Endothelial cell of umbilical vein (primary cell): ENCODE measurements at regions of chr3 and their contacts with region 1.

Region 1: GRCh38 chr3:143348486-143349327 is 229.1 kb downstream of the CHST2 start:
- DNase-seq: no peak
- H3K4me3 ChIP-seq: no peak overlapping the region
- H3K27ac ChIP-seq: no peak overlapping the region
- H3K4me1 ChIP-seq: peaks cover 21% of the 10 kb centered on the region
- H3K27me3 ChIP-seq: no peaks in the 10 kb centered on the region
- CTCF ChIP-seq: no peak
- POLR2A ChIP-seq: no peak

Region 2: GRCh38 chr3:143302638-143303171 is 46.0 kb before region 1 on chr3:
- CTCF ChIA-PET with region 1: no interaction called
- POLR2A ChIA-PET with region 1: no interaction called
- dilution Hi-C with region 1: no loop called
- intact Hi-C with region 1: loop called (anchors 2 kb)
- DNase-seq: peak; percentile 90
- H3K4me3 ChIP-seq: no peak overlapping the region
- H3K27ac ChIP-seq: peak overlapping the region; percentile 71
- H3K4me1 ChIP-seq: peaks cover 48% of the 10 kb centered on the region
- H3K27me3 ChIP-seq: no peaks in the 10 kb centered on the region
- CTCF ChIP-seq: no peak
- POLR2A ChIP-seq: peak; percentile 71

Region 3: GRCh38 chr3:143329567-143330211 is 19.0 kb before region 1 on chr3:
- CTCF ChIA-PET with region 1: interaction called, 8 read pairs
- POLR2A ChIA-PET with region 1: no interaction called
- dilution Hi-C with region 1: no loop called
- intact Hi-C with region 1: loop called (anchors 1 kb)
- DNase-seq: peak; percentile 62
- H3K4me3 ChIP-seq: no peak overlapping the region
- H3K27ac ChIP-seq: no peak overlapping the region
- H3K4me1 ChIP-seq: peaks cover 37% of the 10 kb centered on the region
- H3K27me3 ChIP-seq: no peaks in the 10 kb centered on the region
- CTCF ChIP-seq: peak in 1 of 2 donors; percentile 5
- POLR2A ChIP-seq: no peak

Region 4: DNA sequence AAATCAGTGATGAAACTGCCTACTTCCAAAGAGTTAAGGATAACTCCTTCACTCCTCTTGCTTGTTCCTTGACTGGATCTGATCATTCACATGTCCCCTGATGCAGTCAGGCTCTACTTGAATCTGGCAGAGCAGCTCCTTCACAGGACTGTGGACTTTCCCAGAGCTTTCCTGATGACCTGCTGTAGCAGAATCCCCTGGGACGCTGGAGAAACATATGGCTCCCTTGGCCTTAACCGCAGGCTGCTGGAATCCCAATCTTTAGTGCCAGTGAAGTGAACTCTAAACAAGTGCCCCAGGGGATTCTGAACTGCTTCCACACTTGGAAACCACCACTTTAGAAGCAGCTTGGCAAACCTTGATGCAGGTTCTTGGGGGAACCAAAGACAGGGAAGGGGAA is 11.3 kb before region 1 on chr3:
- CTCF ChIA-PET with region 1: interaction called, 11 read pairs
- POLR2A ChIA-PET with region 1: no interaction called
- dilution Hi-C with region 1: no loop called
- intact Hi-C with region 1: no loop called
- DNase-seq: no peak
- H3K4me3 ChIP-seq: no peak overlapping the region
- H3K27ac ChIP-seq: no peak overlapping the region
- H3K4me1 ChIP-seq: no peaks in the 10 kb centered on the region
- H3K27me3 ChIP-seq: no peaks in the 10 kb centered on the region
- CTCF ChIP-seq: no peak
- POLR2A ChIP-seq: no peak

Region 5: GRCh38 chr3:143831208-143831607 is 482.5 kb after region 1 on chr3:
- CTCF ChIA-PET with region 1: no interaction called
- POLR2A ChIA-PET with region 1: no interaction called
- dilution Hi-C with region 1: no loop called
- intact Hi-C with region 1: no loop called
- DNase-seq: peak; percentile 72
- H3K4me3 ChIP-seq: no peak overlapping the region
- H3K27ac ChIP-seq: peak overlapping the region; percentile 67
- H3K4me1 ChIP-seq: peaks cover 17% of the 10 kb centered on the region
- H3K27me3 ChIP-seq: no peaks in the 10 kb centered on the region
- CTCF ChIP-seq: no peak
- POLR2A ChIP-seq: no peak